ENCODE measurements at regions of chr12 and their contacts with region 1.

Region 1: GRCh38 chr12:111396726-111397445 is 8.8 kb upstream of the SH2B3 start:
- DNase-seq: peak; percentile 89
- H3K4me3 ChIP-seq: peak overlapping the region; percentile 2
- H3K27ac ChIP-seq: no peak overlapping the region
- H3K4me1 ChIP-seq: peaks cover 7% of the 10 kb centered on the region
- CTCF ChIP-seq: peak; percentile 96

Region 2: DNA sequence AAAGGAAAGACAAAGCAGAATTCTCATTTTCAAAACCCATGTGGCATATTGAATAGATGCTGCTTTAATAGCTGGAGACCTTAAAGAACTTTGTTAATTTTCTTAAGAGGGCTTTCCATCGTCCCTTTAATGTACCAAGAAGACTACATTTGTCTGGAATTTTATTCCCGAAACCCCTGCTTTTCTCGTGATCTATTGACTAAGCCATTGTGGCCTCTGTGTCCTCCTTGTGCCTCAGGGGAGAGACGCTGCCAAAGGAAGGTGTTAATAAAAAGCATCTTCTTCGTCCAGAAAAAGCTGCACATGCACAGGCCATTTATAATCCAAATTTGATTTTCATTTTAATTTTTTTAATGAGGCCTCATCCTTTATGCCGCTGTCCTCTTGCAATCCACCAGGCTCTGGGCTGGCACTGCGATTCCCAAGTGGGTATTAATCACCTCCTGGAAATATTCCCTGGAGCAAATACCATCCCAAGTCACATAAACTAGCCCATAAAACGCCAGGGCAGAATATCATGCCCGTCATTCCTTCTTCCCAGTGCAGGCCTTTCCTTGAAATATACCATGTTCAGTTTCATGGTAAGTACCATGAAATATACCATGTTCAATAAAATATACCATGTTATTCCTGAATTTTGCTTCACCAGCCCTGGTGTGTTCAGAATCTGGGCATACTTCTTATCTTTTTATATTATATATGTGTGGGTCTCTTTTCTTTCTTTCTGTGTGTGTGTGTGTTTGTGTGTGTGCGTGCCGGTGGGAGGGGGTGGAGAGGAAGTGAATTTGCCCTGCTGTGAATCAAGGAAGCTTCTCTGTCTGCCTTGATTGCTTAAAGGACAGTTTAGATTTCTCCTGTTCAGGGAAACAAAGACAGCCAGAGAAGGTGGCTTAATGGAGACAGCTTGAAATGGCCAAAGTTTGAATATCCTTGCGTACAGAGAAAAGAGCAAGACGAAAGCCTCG is 175.5 kb before region 1 on chr12:
- CTCF ChIA-PET with region 1: no interaction called
- POLR2A ChIA-PET with region 1: no interaction called
- intact Hi-C with region 1: no loop called
- DNase-seq: no peak
- H3K4me3 ChIP-seq: no peak overlapping the region
- H3K27ac ChIP-seq: no peak overlapping the region
- H3K4me1 ChIP-seq: no peaks in the 10 kb centered on the region
- CTCF ChIP-seq: no peak

Region 3: GRCh38 chr12:111451649-111452129 is 54.8 kb after region 1 on chr12:
- CTCF ChIA-PET with region 1: interaction called, 37 read pairs
- POLR2A ChIA-PET with region 1: interaction called, 4 read pairs
- intact Hi-C with region 1: loop called (anchors 1 kb)
- DNase-seq: peak; percentile 68
- H3K4me3 ChIP-seq: no peak overlapping the region
- H3K27ac ChIP-seq: no peak overlapping the region
- H3K4me1 ChIP-seq: peaks cover 26% of the 10 kb centered on the region
- CTCF ChIP-seq: peak; percentile 99

Measured in OCI-LY7 (cell line).